GM18951 (cell line): ENCODE measurements at regions of chr20 and their contacts with region 1.

Region 1: DNA sequence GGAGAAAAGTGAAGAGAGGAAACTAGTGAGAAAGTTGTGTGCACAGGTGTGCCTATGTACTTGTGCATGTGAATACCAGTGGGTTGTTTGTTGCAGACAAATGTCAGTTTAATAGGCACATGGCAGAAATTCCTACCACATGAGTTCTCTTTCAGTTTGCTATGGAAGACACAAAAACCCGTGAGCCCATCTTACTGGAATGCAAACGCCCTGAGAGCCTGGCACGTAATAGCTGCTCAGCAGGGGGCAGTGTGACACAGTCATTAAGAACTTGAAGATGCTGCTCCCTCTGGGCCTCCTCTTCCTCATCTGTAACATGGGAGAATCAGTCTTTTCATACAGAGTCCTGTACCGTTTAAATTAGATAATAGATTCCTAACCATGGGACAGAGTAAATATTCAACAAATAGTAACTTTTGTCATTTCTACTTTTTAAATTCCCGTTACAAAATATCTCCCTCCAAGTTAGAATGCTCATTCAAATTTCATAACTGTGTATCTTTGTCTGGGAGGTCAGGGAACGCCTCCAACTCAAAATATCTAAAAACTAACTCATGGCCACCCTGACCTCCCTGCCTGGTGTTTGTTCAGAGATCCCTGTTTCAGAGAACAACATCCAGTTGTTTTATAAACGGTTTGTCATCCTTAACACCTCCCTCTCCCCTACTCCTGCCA is 802.9 kb downstream of the MAFB start:
- POLR2A ChIP-seq: no peak

Region 2: DNA sequence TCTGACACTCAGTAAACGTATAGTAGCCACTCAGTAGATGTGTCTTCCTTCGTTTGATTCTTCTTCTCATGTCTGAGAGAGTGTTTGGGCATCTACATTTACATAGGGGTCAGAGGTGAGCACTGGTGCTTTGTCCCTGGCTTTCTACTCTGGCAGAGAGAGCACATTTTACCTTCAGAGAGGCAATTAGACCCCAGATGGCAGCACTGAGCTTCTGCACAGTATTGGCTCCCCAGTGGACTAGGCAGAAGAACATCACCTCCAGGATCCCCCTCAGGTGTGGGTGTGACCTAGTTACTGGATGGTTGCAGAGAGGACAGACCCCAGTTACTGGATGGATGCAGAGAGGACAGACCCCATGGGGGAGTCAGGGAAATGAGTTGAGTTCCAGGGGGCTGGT is 596.8 kb before region 1 on chr20:
- in situ Hi-C with region 1: loop called (anchors 10 kb)
- POLR2A ChIP-seq: no peak

Region 3: GRCh38 chr20:39935901-39936300 is 49.8 kb after region 1 on chr20:
- in situ Hi-C with region 1: no loop called
- POLR2A ChIP-seq: no peak

Region 4: GRCh38 chr20:40241596-40242343 is 355.7 kb after region 1 on chr20:
- in situ Hi-C with region 1: loop called (anchors 10 kb)
- POLR2A ChIP-seq: no peak

Region 5: GRCh38 chr20:40689943-40690835 is 804.1 kb after region 1 on chr20:
- in situ Hi-C with region 1: loop called (anchors 25 kb)
- POLR2A ChIP-seq: no peak